ENCODE measurements at regions of chr3 and their contacts with region 1.

Region 1: GRCh38 chr3:189298469-189299375 is 127.0 kb downstream of the TPRG1 start:
- DNase-seq: no peak
- H3K4me3 Mint-ChIP-seq: peak overlapping the region; percentile 28
- H3K27ac Mint-ChIP-seq: peak overlapping the region; percentile 70
- H3K4me1 Mint-ChIP-seq: peaks cover 44% of the 10 kb centered on the region
- H3K27me3 Mint-ChIP-seq: no peaks in the 10 kb centered on the region

Region 2: GRCh38 chr3:189288348-189289235 is 10.1 kb before region 1 on chr3:
- intact Hi-C with region 1: loop called (anchors 1 kb)
- DNase-seq: no peak
- H3K4me3 Mint-ChIP-seq: no peak overlapping the region
- H3K27ac Mint-ChIP-seq: peak overlapping the region; percentile 59
- H3K4me1 Mint-ChIP-seq: peaks cover 40% of the 10 kb centered on the region
- H3K27me3 Mint-ChIP-seq: no peaks in the 10 kb centered on the region

Region 3: GRCh38 chr3:189340672-189341460 is 42.1 kb after region 1 on chr3:
- intact Hi-C with region 1: no loop called
- DNase-seq: no peak
- H3K4me3 Mint-ChIP-seq: no peak overlapping the region
- H3K27ac Mint-ChIP-seq: no peak overlapping the region
- H3K4me1 Mint-ChIP-seq: peaks cover 10% of the 10 kb centered on the region
- H3K27me3 Mint-ChIP-seq: peaks cover 4% of the 10 kb centered on the region

Region 4: DNA sequence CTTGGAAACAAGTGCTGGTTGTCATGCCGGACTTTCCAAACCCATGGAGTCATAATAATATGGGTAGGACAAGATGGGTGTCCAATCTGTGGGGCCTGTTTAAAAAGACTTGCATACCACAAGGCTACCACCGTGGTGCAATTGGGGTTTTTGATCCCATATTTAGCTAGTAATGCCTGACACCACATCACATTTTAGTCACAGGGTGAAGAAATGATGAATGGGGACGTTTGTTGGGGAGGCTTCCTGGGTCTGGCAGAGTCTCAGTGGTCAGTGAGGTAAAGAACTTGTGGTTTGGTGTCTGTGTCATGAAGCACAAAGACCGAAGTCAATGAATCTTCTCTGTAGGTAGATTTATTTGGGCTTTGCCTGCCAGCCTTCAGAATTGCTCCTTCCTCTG is 791.0 kb after region 1 on chr3:
- intact Hi-C with region 1: no loop called
- DNase-seq: no peak
- H3K4me3 Mint-ChIP-seq: no peak overlapping the region
- H3K27ac Mint-ChIP-seq: no peak overlapping the region
- H3K4me1 Mint-ChIP-seq: no peaks in the 10 kb centered on the region
- H3K27me3 Mint-ChIP-seq: peaks cover 2% of the 10 kb centered on the region

Region 5: DNA sequence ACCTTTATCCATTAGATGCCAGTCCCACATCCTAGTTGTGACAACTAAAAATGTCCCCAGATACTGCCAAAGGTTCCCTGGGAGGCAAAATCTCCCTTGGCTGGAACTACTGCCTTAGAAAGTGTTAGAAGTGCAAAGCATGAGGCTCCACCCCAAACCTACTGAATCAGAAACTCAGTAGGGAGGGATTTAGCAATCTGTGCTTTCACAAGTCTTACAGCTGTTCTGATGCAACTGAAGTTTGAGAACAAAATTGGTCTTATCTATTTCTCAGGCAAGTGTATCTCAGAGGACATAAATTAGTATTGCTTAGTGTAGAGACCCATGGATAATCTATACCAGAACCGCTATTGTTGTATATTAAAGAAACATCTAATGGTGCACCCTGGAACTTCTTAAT is 953.4 kb after region 1 on chr3:
- intact Hi-C with region 1: no loop called
- DNase-seq: no peak
- H3K4me3 Mint-ChIP-seq: no peak overlapping the region
- H3K27ac Mint-ChIP-seq: no peak overlapping the region
- H3K4me1 Mint-ChIP-seq: no peaks in the 10 kb centered on the region
- H3K27me3 Mint-ChIP-seq: no peaks in the 10 kb centered on the region

Measured in activated T-helper 1 cell treated with anti-CD3 and anti-CD28 coated beads, Interleukin-12 subunit alpha, Interleukin-12 subunit beta, Interleukin-2, Interleukin-4 antibody, amounts not matched to agents 30 ng/mL and 10 ng/mL and 1 ng/mL, durations not matched to agents 14 hours and 24 hours and 36 hours (primary cell).